ENCODE measurements at regions of chr6 and their contacts with region 1.

Region 1: GRCh38 chr6:145583739-145584138 is 151.6 kb downstream of the EPM2A start:
- DNase-seq: no peak

Region 2: DNA sequence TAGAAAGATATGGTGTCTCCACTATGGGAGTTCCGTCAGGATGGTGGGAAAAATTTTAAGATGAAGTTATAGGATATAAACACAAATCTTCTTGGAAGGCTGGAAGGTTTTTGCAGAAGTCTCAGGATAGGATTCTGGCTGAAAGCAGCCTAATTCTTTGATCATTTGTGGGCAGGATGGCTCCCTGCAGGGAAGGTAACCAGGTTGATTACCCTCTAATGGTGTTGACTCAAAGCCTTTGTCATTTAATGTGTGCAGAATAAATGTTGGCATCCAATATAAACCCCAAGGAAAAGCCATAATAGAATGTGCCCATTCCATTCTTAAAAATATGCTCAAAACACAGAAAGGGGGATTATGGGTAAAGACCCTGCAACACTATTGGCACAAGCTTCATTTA is 52.7 kb before region 1 on chr6:
- intact Hi-C with region 1: loop called in 1 of 2 experiments (anchors 1 kb)
- DNase-seq: no peak

Region 3: DNA sequence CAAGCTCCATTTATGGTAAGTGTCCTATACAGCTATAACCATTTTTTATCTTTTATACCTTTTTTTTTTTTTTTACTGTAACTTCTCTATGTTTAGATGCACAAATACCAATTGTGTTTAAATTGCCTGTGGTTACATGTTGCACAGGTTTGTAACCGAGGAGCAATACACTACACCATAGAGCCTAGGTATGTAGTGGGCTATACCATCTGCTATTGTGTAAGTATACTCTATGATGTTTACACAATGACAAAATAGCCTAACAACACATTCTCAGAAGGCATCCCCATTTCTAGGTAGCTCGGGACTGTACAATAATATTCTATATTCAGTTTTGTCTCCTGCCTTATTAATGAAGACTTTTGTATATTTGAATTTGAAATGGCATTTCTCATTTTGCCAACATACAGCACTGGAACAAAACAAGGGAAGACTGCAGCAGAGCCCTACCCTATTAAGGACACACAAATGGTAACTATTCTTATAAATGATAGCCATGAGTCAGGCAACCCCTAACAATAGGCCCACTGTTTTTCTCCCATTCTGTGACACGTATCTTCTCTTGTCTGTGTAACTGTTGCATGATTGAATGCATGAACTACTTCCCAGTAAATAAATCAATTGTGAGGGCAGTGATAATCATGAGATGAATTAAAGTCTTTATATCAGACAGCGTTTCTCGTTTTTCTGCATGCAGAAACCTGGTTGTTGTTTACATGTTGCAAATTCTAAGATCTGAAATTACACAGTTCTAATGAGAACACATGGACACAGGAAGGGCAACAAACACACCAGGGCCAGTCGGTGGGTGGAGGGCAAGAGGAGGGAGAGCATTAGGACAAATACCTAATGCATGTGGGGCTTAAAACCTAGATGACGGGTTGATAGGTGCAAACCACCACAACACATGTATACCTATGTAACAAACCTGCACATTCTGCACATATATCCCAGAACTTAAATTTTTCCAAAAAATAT is 22.4 kb before region 1 on chr6:
- intact Hi-C with region 1: loop called in 1 of 2 experiments (anchors 2 kb)
- DNase-seq: no peak

Measured in posterior vena cava (tissue), 2 donors.